ENCODE measurements at regions of chr5 and their contacts with region 1.

Region 1: GRCh38 chr5:142145106-142145900 is 36.7 kb downstream of the NDFIP1 start:
- DNase-seq: peak; percentile 61
- H3K4me3 ChIP-seq: no peak overlapping the region
- H3K27ac ChIP-seq: no peak overlapping the region
- H3K4me1 ChIP-seq: no peaks in the 10 kb centered on the region
- H3K27me3 ChIP-seq: no peaks in the 10 kb centered on the region
- CTCF ChIP-seq: peak; percentile 56 to 71 (median 65)
- EP300 ChIP-seq: no peak
- POLR2A ChIP-seq: no peak

Region 2: DNA sequence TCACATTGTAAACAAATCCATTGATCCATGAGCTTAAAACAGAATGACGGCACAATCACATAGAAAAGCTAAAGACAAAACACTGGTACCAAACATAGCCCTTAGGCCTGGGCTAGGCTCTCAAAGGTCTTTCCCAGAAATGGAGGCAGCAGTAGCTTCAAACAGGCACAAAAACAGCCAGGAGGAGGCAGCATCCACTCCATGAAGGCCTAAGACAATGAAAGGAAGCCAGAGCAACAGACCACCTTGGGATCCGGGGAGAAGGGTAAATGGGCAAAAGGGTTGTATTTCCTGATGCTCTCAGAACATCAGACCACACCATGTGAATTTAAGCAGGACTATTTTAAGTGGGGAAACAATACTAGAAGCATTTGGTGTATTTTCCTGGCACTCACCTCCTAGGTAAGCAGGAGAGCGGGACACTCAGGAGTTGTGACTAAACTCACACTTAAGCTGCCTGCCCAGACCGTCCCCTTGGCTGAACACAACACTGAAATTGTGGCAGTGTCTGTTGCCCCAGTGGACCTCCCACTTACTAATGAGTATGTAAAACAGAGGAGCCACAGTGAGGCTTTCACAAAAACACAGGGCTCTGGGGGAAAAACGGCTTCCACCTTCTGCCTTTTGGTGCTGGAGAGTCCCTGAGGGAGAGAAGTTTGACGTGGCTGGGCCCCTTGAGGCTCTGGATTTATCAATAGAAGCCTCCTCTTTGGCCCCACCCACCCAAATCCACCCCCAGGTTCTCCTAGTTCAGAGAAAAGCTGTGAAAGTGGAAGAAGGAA is 144.4 kb before region 1 on chr5:
- in situ Hi-C with region 1: loop called in 1 of 4 experiments (anchors 10 kb)
- intact Hi-C with region 1: no loop called
- DNase-seq: no peak
- H3K4me3 ChIP-seq: no peak overlapping the region
- H3K27ac ChIP-seq: no peak overlapping the region
- H3K4me1 ChIP-seq: no peaks in the 10 kb centered on the region
- H3K27me3 ChIP-seq: no peaks in the 10 kb centered on the region
- CTCF ChIP-seq: no peak
- EP300 ChIP-seq: no peak
- POLR2A ChIP-seq: no peak

Region 3: GRCh38 chr5:142012792-142013388 is 132.4 kb before region 1 on chr5 and contains the start of gene GNPDA1:
- in situ Hi-C with region 1: loop called in 1 of 4 experiments (anchors 10 kb)
- intact Hi-C with region 1: loop called (anchors 10 kb)
- DNase-seq: peak; percentile 87
- H3K4me3 ChIP-seq: peak within 1 kb of the TSS; percentile 60 to 73 (median 66)
- H3K27ac ChIP-seq: peak within 1 kb of the TSS; percentile 80 to 88 (median 87)
- H3K4me1 ChIP-seq: peaks cover 0 to 26% (median 16%) of the 10 kb centered on the region in 4 donors
- H3K27me3 ChIP-seq: no peaks in the 10 kb centered on the region
- CTCF ChIP-seq: peak in 3 of 5 experiments; percentile 13 to 27 (median 16)
- EP300 ChIP-seq: no peak
- POLR2A ChIP-seq: peak; percentile 49
- total RNA-seq, gene GNPDA1: 1.6 to 24.8 (median 8.9) TPM